T-cell (primary cell): ENCODE measurements at regions of chr1 and their contacts with region 1.

Region 1: DNA sequence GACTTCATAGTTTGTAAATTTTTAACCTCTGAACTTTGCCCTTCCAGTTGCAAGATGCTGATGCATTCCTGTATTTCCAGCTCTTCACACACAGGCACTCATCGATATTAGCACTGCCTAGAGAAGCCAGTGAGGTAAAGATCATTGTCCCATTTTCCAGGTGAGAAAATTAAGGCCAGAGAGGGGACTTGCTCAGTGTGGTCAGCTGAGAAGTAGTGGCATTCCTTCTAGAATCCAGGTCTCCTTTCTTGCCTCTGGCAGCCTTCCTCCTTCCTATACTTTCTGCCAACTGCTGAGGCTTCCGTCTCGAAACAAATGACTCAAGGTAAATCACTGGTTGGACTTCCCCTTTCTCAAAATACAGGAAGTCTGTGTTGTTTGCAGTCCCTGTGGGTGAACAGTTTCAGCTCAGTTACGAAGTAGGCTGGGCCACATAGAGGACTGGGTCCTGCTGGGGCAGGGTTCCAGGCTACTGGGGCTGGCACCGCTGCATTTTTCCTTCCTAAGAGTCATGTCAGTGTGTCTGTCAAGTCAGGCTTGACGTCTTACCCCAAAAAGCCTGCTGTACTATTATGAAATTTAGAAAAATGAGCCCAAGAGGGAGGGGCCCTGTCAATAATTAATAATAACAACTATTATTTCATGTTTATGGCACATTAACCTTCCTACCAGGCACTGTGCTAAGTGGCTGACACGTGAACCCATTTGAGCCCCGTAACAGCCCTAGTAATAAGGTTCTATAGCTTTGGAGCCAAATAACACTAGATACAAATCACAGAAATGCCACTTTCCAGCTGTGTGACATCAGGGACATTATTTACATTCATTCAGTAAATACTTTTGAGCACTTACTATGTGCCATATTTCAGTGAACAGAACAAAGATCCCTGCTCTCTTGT is 16.6 kb upstream of the RNF19B start:
- DNase-seq: peak; percentile 32 to 86 (median 53)
- ATAC-seq: peak; percentile 96 to 99 (median 98)
- H3K4me3 ChIP-seq: peak overlapping the region; percentile 12 to 35
- H3K4me3 Mint-ChIP-seq: peak overlapping the region; percentile 65 to 80 (median 72)
- H3K27ac ChIP-seq: peak overlapping the region; percentile 93
- H3K27ac Mint-ChIP-seq: peak overlapping the region; percentile 97 to 98
- H3K4me1 ChIP-seq: peaks cover 12 to 46% of the 10 kb centered on the region in 2 experiments
- H3K4me1 Mint-ChIP-seq: peaks cover 21 to 43% (median 33%) of the 10 kb centered on the region in 3 donors
- H3K27me3 ChIP-seq: no peaks in the 10 kb centered on the region
- H3K27me3 Mint-ChIP-seq: no peaks in the 10 kb centered on the region

Region 2: DNA sequence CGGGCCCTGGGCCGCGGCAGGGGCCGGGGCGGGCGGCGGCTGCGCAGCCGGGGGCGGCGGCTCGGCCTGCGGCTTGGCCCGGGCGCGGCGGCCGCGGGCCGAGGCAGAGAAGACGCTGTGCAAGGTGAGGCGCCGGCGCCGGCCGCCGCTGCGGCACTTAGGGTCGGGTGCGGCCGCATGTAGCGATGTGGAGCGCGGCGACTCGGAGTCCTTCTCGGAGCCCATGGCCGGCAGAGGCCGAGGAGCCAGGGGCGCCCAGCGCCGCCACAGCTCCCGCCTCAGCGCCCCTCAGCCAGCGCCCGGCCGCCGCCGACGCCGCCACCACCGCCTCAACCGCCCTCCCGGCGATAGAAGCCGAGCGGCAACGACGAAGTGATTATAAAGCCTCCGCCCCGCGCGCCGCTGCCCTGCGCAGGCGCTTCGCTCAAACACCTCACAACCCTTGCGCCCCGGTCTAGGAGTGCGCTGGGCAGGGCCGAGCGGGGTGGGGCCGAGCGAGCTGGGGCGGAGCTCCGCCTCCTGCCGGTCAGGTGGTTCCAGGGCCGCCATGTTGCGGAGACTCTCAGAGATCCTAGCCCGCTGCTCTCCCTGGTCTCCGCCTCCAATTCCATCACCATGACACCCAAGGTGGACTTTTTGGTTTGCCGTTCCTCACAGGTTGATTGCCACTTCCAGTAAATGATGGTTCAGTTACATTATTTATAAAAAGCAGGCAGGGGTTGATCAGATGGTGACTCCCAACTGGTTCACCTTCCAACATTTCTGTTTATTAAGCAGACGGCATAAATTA is 16.6 kb before region 1 on chr1 and contains the start of gene RNF19B:
- CTCF ChIA-PET with region 1: interaction called in 1 of 2 experiments, 12 read pairs
- POLR2A ChIA-PET with region 1: interaction called, 4 to 16 read pairs
- DNase-seq: peak; percentile 82 to 96 (median 89)
- ATAC-seq: peak; percentile 92 to 94 (median 94)
- H3K4me3 ChIP-seq: peak within 1 kb of the TSS; percentile 62 to 65
- H3K4me3 Mint-ChIP-seq: peak within 1 kb of the TSS; percentile 82 to 88 (median 85)
- H3K27ac ChIP-seq: peak within 1 kb of the TSS; percentile 81
- H3K27ac Mint-ChIP-seq: peak within 1 kb of the TSS; percentile 92 to 93
- H3K4me1 ChIP-seq: peaks cover 15 to 22% of the 10 kb centered on the region in 2 experiments
- H3K4me1 Mint-ChIP-seq: peaks cover 31 to 36% (median 34%) of the 10 kb centered on the region in 3 donors
- H3K27me3 ChIP-seq: no peaks in the 10 kb centered on the region
- H3K27me3 Mint-ChIP-seq: no peaks in the 10 kb centered on the region
- total RNA-seq, gene RNF19B: 28.7 to 44.8 (median 30.3) TPM

Region 3: DNA sequence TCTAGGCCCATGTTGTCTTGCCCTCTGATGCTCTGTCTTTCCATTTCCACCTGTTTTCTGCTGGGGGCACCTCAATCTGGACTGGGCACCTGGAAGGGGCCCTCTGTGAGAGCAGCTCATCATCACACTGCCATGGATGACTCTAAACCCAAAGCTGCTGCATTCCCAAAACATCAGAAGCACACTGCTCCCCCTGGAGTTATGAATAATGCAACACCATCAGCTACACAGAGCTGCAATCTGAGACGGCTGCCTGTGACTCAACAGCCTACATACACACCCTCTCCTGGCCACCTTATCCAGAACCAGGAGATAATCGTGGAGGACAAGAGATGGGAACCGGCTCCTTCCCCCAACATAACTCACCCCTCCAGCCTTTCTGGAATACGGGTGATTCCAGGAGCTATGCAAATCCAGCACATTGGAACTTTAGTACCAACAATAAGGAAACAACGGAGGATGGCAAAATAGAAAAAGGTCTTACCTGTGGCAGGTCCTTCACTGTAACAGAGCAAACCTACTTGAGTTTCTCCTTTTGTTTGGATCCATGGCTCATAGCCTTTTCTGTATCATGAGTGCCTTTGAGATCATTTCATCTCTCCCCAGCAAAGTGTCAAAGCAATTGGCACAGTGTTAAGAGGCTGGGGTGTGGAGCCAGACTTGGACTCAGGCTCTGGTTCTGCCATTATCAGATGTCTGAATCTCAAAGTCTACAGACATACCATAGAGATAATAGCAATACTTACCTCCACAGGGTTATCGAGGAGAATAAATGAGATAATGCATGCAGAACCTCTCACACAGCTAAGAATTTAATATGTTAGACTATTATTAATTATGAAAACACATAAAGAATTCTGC is 26.2 kb after region 1 on chr1:
- CTCF ChIA-PET with region 1: no interaction called
- POLR2A ChIA-PET with region 1: no interaction called
- DNase-seq: peak in 2 of 35 experiments; percentile 15 to 49
- ATAC-seq: peak in 3 of 4 experiments; percentile 45 to 56 (median 48)
- H3K4me3 ChIP-seq: no peak overlapping the region
- H3K4me3 Mint-ChIP-seq: no peak overlapping the region
- H3K27ac ChIP-seq: no peak overlapping the region
- H3K27ac Mint-ChIP-seq: no peak overlapping the region
- H3K4me1 ChIP-seq: no peaks in the 10 kb centered on the region
- H3K4me1 Mint-ChIP-seq: no peaks in the 10 kb centered on the region
- H3K27me3 ChIP-seq: no peaks in the 10 kb centered on the region
- H3K27me3 Mint-ChIP-seq: no peaks in the 10 kb centered on the region